Transverse colon (tissue), 4 donors: ENCODE measurements at regions of chr14 and their contacts with region 1.

Region 1: GRCh38 chr14:89178802-89179535 is 238.1 kb downstream of the FOXN3 start:
- DNase-seq: no peak
- H3K4me3 ChIP-seq: no peak overlapping the region
- H3K27ac ChIP-seq: no peak overlapping the region
- H3K4me1 ChIP-seq: peaks cover 0 to 8% (median 2%) of the 10 kb centered on the region in 4 donors
- H3K27me3 ChIP-seq: no peaks in the 10 kb centered on the region
- CTCF ChIP-seq: no peak
- EP300 ChIP-seq: no peak
- POLR2A ChIP-seq: no peak

Region 2: GRCh38 chr14:89155491-89155890 is 23.5 kb before region 1 on chr14:
- in situ Hi-C with region 1: no loop called
- intact Hi-C with region 1: no loop called
- DNase-seq: no peak
- H3K4me3 ChIP-seq: no peak overlapping the region
- H3K27ac ChIP-seq: no peak overlapping the region
- H3K4me1 ChIP-seq: no peaks in the 10 kb centered on the region
- H3K27me3 ChIP-seq: no peaks in the 10 kb centered on the region
- CTCF ChIP-seq: no peak
- EP300 ChIP-seq: no peak
- POLR2A ChIP-seq: no peak

Region 3: GRCh38 chr14:89425931-89426330 is 247.0 kb after region 1 on chr14:
- in situ Hi-C with region 1: no loop called
- intact Hi-C with region 1: loop called (anchors 10 kb)
- DNase-seq: peak; percentile 33
- H3K4me3 ChIP-seq: no peak overlapping the region
- H3K27ac ChIP-seq: no peak overlapping the region
- H3K4me1 ChIP-seq: peaks cover 22 to 72% (median 54%) of the 10 kb centered on the region in 4 donors
- H3K27me3 ChIP-seq: no peaks in the 10 kb centered on the region
- CTCF ChIP-seq: no peak
- EP300 ChIP-seq: no peak
- POLR2A ChIP-seq: no peak